ENCODE measurements at regions of chr4 and their contacts with region 1.

Region 1: GRCh38 chr4:26081795-26082498 is 167.9 kb downstream of the SMIM20 start:
- DNase-seq: peak; percentile 38
- H3K4me3 ChIP-seq: no peak overlapping the region
- H3K27ac ChIP-seq: no peak overlapping the region
- H3K4me1 ChIP-seq: peaks cover 17% of the 10 kb centered on the region
- H3K27me3 ChIP-seq: peaks cover 8% of the 10 kb centered on the region
- CTCF ChIP-seq: peak; percentile 64 to 65

Region 2: GRCh38 chr4:25993395-25994185 is 88.4 kb before region 1 on chr4:
- CTCF ChIA-PET with region 1: no interaction called
- dilution Hi-C with region 1: no loop called
- in situ Hi-C with region 1: no loop called
- intact Hi-C with region 1: loop called (anchors 1 kb)
- DNase-seq: no peak
- H3K4me3 ChIP-seq: no peak overlapping the region
- H3K27ac ChIP-seq: no peak overlapping the region
- H3K4me1 ChIP-seq: no peaks in the 10 kb centered on the region
- H3K27me3 ChIP-seq: no peaks in the 10 kb centered on the region
- CTCF ChIP-seq: no peak

Region 3: DNA sequence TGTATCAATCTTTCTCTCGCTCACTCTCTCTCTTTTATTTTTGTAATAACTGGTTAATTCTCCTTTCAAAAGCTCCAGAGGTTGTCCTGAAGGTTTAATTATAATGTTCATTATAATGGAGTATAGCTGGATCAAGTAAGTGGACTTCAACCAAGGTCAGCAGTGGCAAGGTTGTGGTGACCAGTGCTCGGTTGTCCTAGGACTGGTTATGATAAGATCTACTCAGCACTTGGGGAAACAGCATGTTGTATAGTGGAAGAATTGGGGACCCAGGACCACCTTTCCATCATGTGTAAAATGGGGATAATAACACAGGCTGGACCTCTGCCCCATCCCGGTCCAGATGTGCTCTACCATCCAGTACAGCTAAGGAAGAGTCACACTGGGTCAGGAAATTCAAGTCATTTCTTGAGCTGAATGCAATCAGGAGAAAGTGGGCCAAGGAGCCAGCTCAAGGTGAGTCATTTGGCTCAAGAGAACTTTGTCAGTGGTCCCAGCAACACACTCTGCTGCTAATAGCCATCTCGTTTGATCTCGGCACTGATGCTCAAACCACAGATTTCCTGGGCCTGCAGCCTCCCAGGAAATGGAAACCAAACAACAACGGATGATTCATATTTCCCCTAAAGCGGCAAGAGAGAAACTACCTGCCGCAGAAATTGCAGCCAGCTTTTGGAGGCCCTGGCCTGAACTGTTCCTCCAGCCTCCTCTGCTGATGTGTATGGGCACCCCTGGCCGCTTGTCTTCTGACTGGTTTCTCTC is 115.3 kb after region 1 on chr4:
- CTCF ChIA-PET with region 1: interaction called, 3 read pairs
- dilution Hi-C with region 1: no loop called
- in situ Hi-C with region 1: no loop called
- intact Hi-C with region 1: loop called (anchors 10 kb)
- DNase-seq: peak; percentile 96
- H3K4me3 ChIP-seq: no peak overlapping the region
- H3K27ac ChIP-seq: no peak overlapping the region
- H3K4me1 ChIP-seq: peaks cover 8% of the 10 kb centered on the region
- H3K27me3 ChIP-seq: peaks cover 21% of the 10 kb centered on the region
- CTCF ChIP-seq: no peak

Region 4: DNA sequence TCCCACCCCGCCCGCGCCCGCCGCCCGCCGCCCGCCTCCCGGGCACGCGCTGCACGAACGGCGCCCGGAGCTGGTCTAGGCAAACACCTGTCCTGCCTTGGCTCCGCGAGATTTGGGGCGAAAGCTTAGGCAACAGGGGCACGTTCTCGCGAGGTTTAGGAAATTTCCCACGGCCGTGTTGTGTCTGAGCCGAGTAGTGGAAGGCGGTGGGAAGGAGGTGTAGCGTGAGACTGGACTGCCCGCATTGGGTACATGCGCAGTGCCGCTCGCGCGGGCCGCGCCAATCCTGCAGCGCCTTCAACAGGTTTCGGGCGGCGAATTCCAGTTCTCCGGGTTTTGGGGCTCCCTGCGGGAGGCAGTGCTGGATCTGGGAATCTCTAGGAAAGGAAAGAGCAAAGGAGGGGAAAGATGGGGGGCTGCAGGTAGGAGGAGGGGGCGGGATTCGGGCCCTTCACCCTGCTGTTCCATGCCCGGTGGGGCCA is 237.6 kb after region 1 on chr4:
- CTCF ChIA-PET with region 1: interaction called, 5 read pairs
- dilution Hi-C with region 1: no loop called
- in situ Hi-C with region 1: loop called in 1 of 2 experiments (anchors 5 kb)
- intact Hi-C with region 1: loop called (anchors 1 kb)
- DNase-seq: peak; percentile 99
- H3K4me3 ChIP-seq: peak overlapping the region; percentile 68 to 90 (median 86)
- H3K27ac ChIP-seq: peak overlapping the region; percentile 79
- H3K4me1 ChIP-seq: peaks cover 15% of the 10 kb centered on the region
- H3K27me3 ChIP-seq: no peaks in the 10 kb centered on the region
- CTCF ChIP-seq: peak in 1 of 2 donors; percentile 3

Region 5: GRCh38 chr4:26410385-26411293 is 328.7 kb after region 1 on chr4:
- CTCF ChIA-PET with region 1: no interaction called
- dilution Hi-C with region 1: no loop called
- in situ Hi-C with region 1: no loop called
- intact Hi-C with region 1: loop called (anchors 1 kb)
- DNase-seq: peak; percentile 42
- H3K4me3 ChIP-seq: no peak overlapping the region
- H3K27ac ChIP-seq: no peak overlapping the region
- H3K4me1 ChIP-seq: no peaks in the 10 kb centered on the region
- H3K27me3 ChIP-seq: no peaks in the 10 kb centered on the region
- CTCF ChIP-seq: peak; percentile 52 to 58